ENCODE measurements at regions of chr12 and their contacts with region 1.

Region 1: DNA sequence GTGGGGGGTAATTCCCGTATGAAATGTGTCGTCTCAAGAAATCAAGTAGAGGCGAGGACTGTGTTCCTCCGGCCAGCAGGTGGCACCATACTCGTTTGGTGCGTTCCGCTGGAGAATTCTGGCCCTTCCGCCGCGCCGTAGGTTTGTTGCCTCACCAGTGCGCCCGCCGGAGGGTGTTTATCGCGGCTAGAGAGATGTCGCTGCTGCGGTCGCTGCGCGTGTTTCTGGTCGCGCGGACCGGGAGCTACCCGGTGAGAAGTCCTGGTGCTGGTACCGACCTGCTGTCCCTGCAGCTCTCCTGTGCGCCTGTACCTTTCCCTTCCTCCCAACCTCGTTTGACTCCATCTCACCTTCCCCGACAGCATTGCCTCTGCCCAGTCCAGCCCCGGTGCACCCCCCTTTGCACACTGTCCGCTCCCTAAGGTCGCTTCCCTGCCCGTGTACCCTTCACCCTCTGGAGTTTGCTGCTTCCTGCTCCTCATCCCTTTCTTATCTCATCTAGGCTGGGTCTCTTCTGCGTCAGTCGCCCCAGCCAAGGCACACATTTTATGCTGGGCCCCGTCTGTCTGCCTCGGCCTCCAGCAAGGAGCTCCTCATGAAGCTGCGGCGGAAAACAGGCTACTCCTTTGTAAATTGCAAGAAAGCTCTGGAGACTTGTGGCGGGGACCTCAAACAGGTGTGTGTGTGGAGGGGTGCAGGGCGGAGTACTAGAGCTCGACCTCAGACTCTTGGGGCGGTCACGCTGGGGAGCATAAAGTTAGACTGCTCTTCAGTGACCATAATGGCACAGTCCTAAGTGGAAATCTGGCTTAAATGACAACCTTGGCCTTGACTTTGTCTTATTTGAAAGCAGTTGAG is at the start of gene TSFM:
- DNase-seq: peak; percentile 98
- H3K4me3 Mint-ChIP-seq: peak within 1 kb of the TSS; percentile 99
- H3K27ac Mint-ChIP-seq: peak within 1 kb of the TSS; percentile 95
- H3K4me1 Mint-ChIP-seq: peaks cover 50% of the 10 kb centered on the region
- H3K27me3 Mint-ChIP-seq: no peaks in the 10 kb centered on the region

Region 2: GRCh38 chr12:57756406-57757341 is 26.2 kb before region 1 on chr12:
- CTCF ChIA-PET with region 1: interaction called, 10 read pairs
- DNase-seq: peak; percentile 77
- H3K4me3 Mint-ChIP-seq: peak overlapping the region; percentile 81
- H3K27ac Mint-ChIP-seq: peak overlapping the region; percentile 70
- H3K4me1 Mint-ChIP-seq: peaks cover 56% of the 10 kb centered on the region
- H3K27me3 Mint-ChIP-seq: peaks cover 4% of the 10 kb centered on the region

Region 3: DNA sequence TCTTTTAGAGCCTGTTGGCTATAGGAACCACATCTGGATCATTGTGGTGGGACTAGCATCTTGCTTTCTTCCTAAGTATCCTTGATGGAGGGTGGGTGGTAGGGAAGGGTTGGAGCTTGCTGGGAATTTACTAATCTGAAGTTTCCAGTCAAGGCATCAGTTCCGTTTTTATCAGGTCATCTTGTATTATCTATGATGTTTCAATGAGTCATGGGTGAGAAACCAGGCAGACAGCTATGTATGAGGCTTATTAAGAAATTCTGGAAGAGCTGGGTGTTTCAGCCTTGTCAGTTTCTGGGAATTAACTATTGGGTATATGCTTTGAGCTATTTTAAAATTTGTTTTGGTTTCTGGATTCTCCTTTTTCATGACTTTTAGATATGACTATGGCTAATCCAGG is 11.1 kb after region 1 on chr12:
- CTCF ChIA-PET with region 1: interaction called, 13 read pairs
- DNase-seq: no peak
- H3K4me3 Mint-ChIP-seq: no peak overlapping the region
- H3K27ac Mint-ChIP-seq: no peak overlapping the region
- H3K4me1 Mint-ChIP-seq: no peaks in the 10 kb centered on the region
- H3K27me3 Mint-ChIP-seq: no peaks in the 10 kb centered on the region

Region 4: GRCh38 chr12:57899010-57899662 is 116.3 kb after region 1 on chr12:
- CTCF ChIA-PET with region 1: interaction called, 12 read pairs
- DNase-seq: peak; percentile 76
- H3K4me3 Mint-ChIP-seq: peak overlapping the region; percentile 39
- H3K27ac Mint-ChIP-seq: peak overlapping the region; percentile 93
- H3K4me1 Mint-ChIP-seq: peaks cover 55% of the 10 kb centered on the region
- H3K27me3 Mint-ChIP-seq: peaks cover 14% of the 10 kb centered on the region